HCT116 (cell line): ENCODE measurements at regions of chr1 and their contacts with region 1.

Region 1: GRCh38 chr1:219812491-219813203 is 115.7 kb downstream of the SLC30A10 start:
- DNase-seq: peak; percentile 75
- ATAC-seq: peak; percentile 95
- H3K4me3 ChIP-seq: no peak overlapping the region
- H3K27ac ChIP-seq: no peak overlapping the region
- H3K4me1 ChIP-seq: peaks cover 0 to 6% of the 10 kb centered on the region in 2 experiments; a peak in 1 of 4 replicates
- H3K27me3 ChIP-seq: peaks cover 59% of the 10 kb centered on the region; the same call in 1 of the 2 replicates
- CTCF ChIP-seq: peak; percentile 84 to 94 (median 85)
- POLR2A ChIP-seq: no peak
- RAD21 ChIP-seq: peak; percentile 94

Region 2: GRCh38 chr1:218339267-218339831 is 1473.3 kb before region 1 on chr1:
- CTCF ChIA-PET with region 1: no interaction called
- POLR2A ChIA-PET with region 1: no interaction called
- RAD21 ChIA-PET with region 1: no interaction called
- intact Hi-C with region 1: loop called (anchors 2 kb)
- DNase-seq: no peak
- ATAC-seq: 0 out of 2 replicates have a peak, but pooled peaks have one; percentile 36
- H3K4me3 ChIP-seq: no peak overlapping the region
- H3K27ac ChIP-seq: no peak overlapping the region
- H3K4me1 ChIP-seq: no peaks in the 10 kb centered on the region
- H3K27me3 ChIP-seq: no peaks in the 10 kb centered on the region
- CTCF ChIP-seq: peak; percentile 61 to 73 (median 65); a peak in 5 of 6 replicates
- POLR2A ChIP-seq: no peak
- RAD21 ChIP-seq: peak; percentile 81

Region 3: DNA sequence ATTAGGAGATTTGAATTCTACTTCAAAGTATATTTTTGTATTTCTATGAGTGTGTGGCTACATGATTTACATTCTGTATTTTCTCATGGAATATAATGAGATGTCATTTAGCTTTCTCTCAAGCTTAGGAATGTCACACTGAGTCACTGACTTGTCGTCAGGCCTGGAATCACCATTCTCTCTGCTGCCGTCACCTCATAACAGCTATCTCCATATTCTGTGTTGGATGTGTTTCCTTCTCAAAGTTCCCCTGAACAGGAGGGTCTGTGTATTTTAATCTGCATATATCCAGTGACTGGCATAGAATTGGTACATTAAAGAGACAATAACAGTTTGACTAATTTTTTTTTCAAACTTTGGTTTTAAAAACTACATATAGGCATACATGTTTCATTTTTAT is 603.1 kb before region 1 on chr1:
- CTCF ChIA-PET with region 1: interaction called, 3 read pairs
- POLR2A ChIA-PET with region 1: no interaction called
- RAD21 ChIA-PET with region 1: no interaction called
- intact Hi-C with region 1: loop called (anchors 1 kb)
- DNase-seq: no peak
- ATAC-seq: no peak
- H3K4me3 ChIP-seq: no peak overlapping the region
- H3K27ac ChIP-seq: no peak overlapping the region
- H3K4me1 ChIP-seq: no peaks in the 10 kb centered on the region
- H3K27me3 ChIP-seq: no peaks in the 10 kb centered on the region
- CTCF ChIP-seq: no peak
- POLR2A ChIP-seq: no peak
- RAD21 ChIP-seq: no peak

Region 4: GRCh38 chr1:219416594-219417238 is 395.9 kb before region 1 on chr1:
- CTCF ChIA-PET with region 1: no interaction called
- POLR2A ChIA-PET with region 1: no interaction called
- RAD21 ChIA-PET with region 1: no interaction called
- intact Hi-C with region 1: loop called (anchors 10 kb)
- DNase-seq: peak; percentile 45
- ATAC-seq: peak; percentile 95
- H3K4me3 ChIP-seq: no peak overlapping the region
- H3K27ac ChIP-seq: no peak overlapping the region
- H3K4me1 ChIP-seq: no peaks in the 10 kb centered on the region
- H3K27me3 ChIP-seq: no peaks in the 10 kb centered on the region
- CTCF ChIP-seq: peak; percentile 34 to 80 (median 79); a peak in 4 of 6 replicates
- POLR2A ChIP-seq: no peak
- RAD21 ChIP-seq: peak; percentile 56

Region 5: DNA sequence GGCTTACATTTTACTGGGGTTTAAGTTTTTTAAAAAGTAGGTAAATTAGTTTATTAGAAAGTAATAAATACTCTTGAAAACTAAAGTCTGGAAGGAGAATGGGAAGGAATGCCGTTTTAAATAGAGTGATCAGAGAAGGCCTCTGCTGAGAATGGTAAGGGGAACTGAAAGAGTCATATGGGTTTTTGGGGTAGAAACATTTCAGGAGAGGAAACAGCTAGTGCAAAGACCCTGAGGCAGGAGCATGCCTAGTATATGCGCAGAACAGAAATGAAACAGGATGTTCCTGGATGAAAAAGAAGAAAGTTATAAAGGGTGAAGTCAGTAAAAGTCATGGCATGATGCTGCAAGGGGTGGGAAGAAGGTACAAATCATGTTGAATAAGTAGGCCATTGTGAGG is 238.7 kb before region 1 on chr1:
- CTCF ChIA-PET with region 1: interaction called, 3 read pairs
- POLR2A ChIA-PET with region 1: no interaction called
- RAD21 ChIA-PET with region 1: no interaction called
- intact Hi-C with region 1: loop called (anchors 5 kb)
- DNase-seq: no peak
- ATAC-seq: no peak
- H3K4me3 ChIP-seq: no peak overlapping the region
- H3K27ac ChIP-seq: no peak overlapping the region
- H3K4me1 ChIP-seq: no peaks in the 10 kb centered on the region
- H3K27me3 ChIP-seq: no peaks in the 10 kb centered on the region
- CTCF ChIP-seq: no peak
- POLR2A ChIP-seq: no peak
- RAD21 ChIP-seq: no peak

Region 6: GRCh38 chr1:219660666-219661463 is 151.8 kb before region 1 on chr1:
- CTCF ChIA-PET with region 1: interaction called, 8 read pairs
- POLR2A ChIA-PET with region 1: no interaction called
- RAD21 ChIA-PET with region 1: no interaction called
- intact Hi-C with region 1: loop called (anchors 2 kb)
- DNase-seq: peak; percentile 87
- ATAC-seq: peak; percentile 97
- H3K4me3 ChIP-seq: peak overlapping the region in 1 of 2 experiments; percentile 23; a peak in 2 of 4 replicates
- H3K27ac ChIP-seq: no peak overlapping the region
- H3K4me1 ChIP-seq: peaks cover 4 to 6% of the 10 kb centered on the region in 2 experiments; a peak in 2 of 4 replicates
- H3K27me3 ChIP-seq: no peaks in the 10 kb centered on the region
- CTCF ChIP-seq: peak; percentile 87 to 94 (median 88)
- POLR2A ChIP-seq: no peak
- RAD21 ChIP-seq: peak; percentile 91

Region 7: GRCh38 chr1:219973213-219973612 is 160.6 kb after region 1 on chr1:
- CTCF ChIA-PET with region 1: no interaction called
- POLR2A ChIA-PET with region 1: no interaction called
- RAD21 ChIA-PET with region 1: no interaction called
- intact Hi-C with region 1: no loop called
- DNase-seq: no peak
- ATAC-seq: no peak
- H3K4me3 ChIP-seq: no peak overlapping the region
- H3K27ac ChIP-seq: no peak overlapping the region
- H3K4me1 ChIP-seq: no peaks in the 10 kb centered on the region
- H3K27me3 ChIP-seq: no peaks in the 10 kb centered on the region
- CTCF ChIP-seq: no peak
- POLR2A ChIP-seq: no peak
- RAD21 ChIP-seq: no peak

Region 8: DNA sequence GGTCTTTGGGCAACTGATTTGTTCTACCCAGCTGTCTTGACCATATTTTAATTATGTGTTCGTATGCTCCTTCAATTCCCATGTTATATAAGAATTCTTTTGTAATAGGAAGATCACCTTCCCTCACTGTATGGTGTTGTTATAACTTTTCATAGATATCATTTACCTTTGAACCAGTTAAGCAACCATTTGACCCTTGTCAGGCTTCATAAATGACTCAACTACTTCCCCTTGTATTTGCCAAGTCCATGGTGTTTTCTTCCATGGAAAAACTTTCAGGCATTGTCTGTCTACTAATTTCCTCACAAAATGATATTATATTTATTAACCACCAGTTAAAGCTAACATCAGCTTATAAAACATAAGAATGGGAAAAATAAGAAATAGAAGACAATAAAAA is 271.8 kb after region 1 on chr1:
- CTCF ChIA-PET with region 1: no interaction called
- POLR2A ChIA-PET with region 1: no interaction called
- RAD21 ChIA-PET with region 1: no interaction called
- intact Hi-C with region 1: no loop called
- DNase-seq: no peak
- ATAC-seq: no peak
- H3K4me3 ChIP-seq: no peak overlapping the region
- H3K27ac ChIP-seq: no peak overlapping the region
- H3K4me1 ChIP-seq: no peaks in the 10 kb centered on the region
- H3K27me3 ChIP-seq: no peaks in the 10 kb centered on the region
- CTCF ChIP-seq: no peak
- POLR2A ChIP-seq: no peak
- RAD21 ChIP-seq: no peak